HepG2 (cell line): ENCODE measurements at regions of chr1 and their contacts with region 1.

Region 1: DNA sequence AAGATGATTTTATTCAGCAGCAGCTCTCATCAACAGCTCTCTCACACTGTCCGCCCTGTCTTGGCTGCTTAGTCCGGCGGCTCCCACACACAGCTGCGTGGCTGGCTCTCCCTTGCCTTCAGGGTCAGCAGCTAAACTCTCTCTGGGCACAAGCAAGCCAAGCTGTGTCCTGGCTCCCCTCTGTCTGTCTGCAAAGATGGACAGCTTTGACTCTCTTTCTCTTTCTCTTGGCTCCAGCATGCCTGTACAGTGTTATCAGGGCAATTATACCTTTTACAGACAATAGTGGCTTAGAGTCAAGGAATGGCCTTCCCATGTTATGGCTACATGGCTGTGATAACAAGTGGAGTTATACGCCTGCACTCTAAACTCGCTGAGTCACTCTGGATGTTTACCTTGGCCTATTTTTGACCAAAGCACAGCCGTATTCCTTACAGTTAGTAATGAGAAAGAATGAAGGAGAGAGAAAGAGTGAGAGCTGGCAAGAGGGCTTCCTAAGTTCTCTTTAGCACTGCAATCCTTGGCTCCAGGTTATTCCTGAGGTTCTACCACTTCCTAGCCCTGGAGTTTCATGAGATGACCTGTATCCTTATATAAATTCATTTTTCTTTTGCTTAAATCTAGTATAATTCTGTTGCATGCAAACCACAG is 59.9 kb upstream of the ZSWIM5 start:
- DNase-seq: peak; percentile 89
- ATAC-seq: peak; percentile 83
- H3K4me3 ChIP-seq: no peak overlapping the region; a peak in 1 of 6 replicates
- H3K27ac ChIP-seq: peak overlapping the region; percentile 96
- H3K4me1 ChIP-seq: peaks cover 54% of the 10 kb centered on the region
- H3K27me3 ChIP-seq: no peaks in the 10 kb centered on the region
- CTCF ChIP-seq: no peak
- EP300 ChIP-seq: peak; percentile 17 to 68; a peak in 2 of 4 replicates
- POLR2A ChIP-seq: no peak
- RAD21 ChIP-seq: no peak

Region 2: DNA sequence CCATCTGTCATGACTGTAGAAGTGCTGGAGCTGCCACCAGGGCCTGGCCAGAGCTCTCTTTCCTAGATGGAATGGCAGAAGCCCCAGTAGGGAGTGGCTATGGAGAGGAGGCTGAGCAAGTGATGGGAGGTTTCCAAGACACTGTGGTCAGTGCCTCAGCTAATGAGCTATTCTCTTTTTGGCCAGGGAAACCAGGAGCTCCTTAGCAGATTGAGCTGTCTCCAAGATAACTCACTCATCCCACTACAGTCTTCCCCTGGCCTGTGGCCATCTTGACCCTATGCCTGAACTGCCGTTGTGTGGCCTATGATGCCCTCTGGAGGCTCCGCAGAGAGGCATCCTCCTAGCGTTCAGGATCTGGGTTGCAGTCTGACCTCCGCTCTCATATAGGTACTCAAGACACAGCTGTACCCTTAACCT is 971.7 kb before region 1 on chr1:
- CTCF ChIA-PET with region 1: no interaction called
- POLR2A ChIA-PET with region 1: no interaction called
- in situ Hi-C with region 1: no loop called
- intact Hi-C with region 1: no loop called
- DNase-seq: peak; percentile 31
- ATAC-seq: peak; percentile 75
- H3K4me3 ChIP-seq: no peak overlapping the region
- H3K27ac ChIP-seq: no peak overlapping the region
- H3K4me1 ChIP-seq: peaks cover 40% of the 10 kb centered on the region
- H3K27me3 ChIP-seq: no peaks in the 10 kb centered on the region
- CTCF ChIP-seq: peak; percentile 72
- EP300 ChIP-seq: no peak
- POLR2A ChIP-seq: no peak
- RAD21 ChIP-seq: peak; percentile 70

Region 3: DNA sequence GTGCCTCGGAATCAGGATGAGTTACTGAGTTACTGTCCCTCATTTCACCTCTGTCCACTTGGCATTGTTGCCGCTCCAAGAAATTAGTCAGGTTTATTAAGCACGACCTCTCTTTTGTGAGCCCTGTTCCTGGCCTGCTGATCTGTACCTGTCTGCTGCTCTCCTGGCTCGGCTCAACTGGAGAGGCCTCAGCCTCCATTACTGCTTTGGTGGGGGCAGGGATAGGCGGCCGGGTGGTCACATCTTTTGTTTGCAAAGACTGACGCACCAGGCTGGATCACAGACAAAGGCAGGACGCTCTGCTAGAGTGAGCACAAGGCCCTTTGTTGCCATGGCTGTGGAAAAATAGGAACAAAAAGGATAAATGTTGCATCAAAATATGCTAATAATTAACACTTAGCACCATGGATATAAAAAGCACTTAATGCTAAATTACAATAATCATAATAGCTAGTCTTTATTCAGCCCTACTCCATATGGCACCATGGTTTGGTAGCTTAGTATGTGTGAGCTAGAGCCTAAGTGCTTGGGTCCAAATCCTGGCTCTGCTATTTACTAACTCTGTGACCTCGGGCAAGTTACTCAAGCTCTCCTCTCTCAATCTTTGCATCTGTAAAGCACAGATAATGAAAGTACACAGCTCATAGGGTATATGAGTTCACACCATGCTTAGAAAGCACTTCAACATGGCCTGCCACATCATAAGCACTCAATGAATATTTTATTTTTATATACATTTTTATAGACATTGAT is 31.5 kb after region 1 on chr1:
- CTCF ChIA-PET with region 1: no interaction called
- POLR2A ChIA-PET with region 1: interaction called, 12 read pairs
- in situ Hi-C with region 1: no loop called
- intact Hi-C with region 1: no loop called
- DNase-seq: peak; percentile 87
- ATAC-seq: peak; percentile 84
- H3K4me3 ChIP-seq: peak overlapping the region in 2 of 3 experiments; percentile 9 to 52; a peak in 3 of 6 replicates
- H3K27ac ChIP-seq: peak overlapping the region; percentile 80
- H3K4me1 ChIP-seq: peaks cover 78% of the 10 kb centered on the region
- H3K27me3 ChIP-seq: no peaks in the 10 kb centered on the region
- CTCF ChIP-seq: no peak
- EP300 ChIP-seq: peak; percentile 62 to 77; a peak in 2 of 4 replicates
- POLR2A ChIP-seq: peak in 1 of 2 experiments; percentile 53; a peak in 2 of 4 replicates
- RAD21 ChIP-seq: no peak